ENCODE measurements at regions of chr12 and their contacts with region 1.

Region 1: DNA sequence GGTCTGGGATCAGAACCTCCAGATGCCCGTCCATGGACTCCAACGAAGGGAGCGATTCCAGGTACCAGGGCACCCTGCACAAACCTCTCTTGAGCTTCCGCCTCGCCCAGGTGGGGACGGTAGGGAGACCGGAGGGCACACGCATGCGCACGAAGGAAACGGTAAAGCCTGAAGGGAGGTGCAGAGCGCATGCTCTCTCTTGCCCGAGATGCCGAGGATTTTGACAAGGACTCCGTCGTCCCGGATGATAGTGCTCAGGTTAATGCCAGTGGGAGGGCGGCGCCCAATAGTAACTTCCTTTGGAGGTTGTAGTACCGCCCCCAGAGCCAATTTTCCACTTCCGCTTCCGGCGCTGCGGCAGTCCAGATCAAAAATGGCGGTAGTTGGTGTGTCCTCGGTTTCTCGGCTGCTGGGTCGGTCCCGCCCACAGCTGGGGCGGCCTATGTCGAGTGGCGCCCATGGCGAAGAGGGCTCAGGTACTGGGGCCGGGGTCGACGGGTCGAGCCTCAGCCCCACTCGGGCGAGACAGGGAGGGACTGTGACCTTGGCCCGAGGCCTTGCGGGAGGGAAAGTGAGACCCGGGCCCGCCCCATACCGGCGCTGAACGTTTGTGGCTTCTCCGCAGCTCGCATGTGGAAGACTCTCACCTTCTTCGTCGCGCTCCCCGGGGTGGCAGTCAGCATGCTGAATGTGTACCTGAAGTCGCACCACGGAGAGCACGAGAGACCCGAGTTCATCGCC is at the start of gene COX6A1:
- ATAC-seq: peak; percentile 96 to 100 (median 100)
- H3K4me3 ChIP-seq: peak within 1 kb of the TSS; percentile 62 to 99 (median 83)
- H3K27ac ChIP-seq: peak within 1 kb of the TSS; percentile 67 to 88
- H3K4me1 ChIP-seq: peaks cover 13 to 14% of the 10 kb centered on the region in 2 donors
- total RNA-seq, gene COX6A1: 604 to 967 (median 671) TPM

Region 2: GRCh38 chr12:120321382-120322202 is 116.3 kb before region 1 on chr12:
- in situ Hi-C with region 1: loop called in 4 of 9 experiments (anchors 10 to 25 kb)
- ATAC-seq: peak in 2 of 8 experiments; percentile 4 to 6
- H3K4me3 ChIP-seq: no peak overlapping the region
- H3K27ac ChIP-seq: no peak overlapping the region
- H3K4me1 ChIP-seq: peaks cover 5 to 8% of the 10 kb centered on the region in 2 donors

Region 3: DNA sequence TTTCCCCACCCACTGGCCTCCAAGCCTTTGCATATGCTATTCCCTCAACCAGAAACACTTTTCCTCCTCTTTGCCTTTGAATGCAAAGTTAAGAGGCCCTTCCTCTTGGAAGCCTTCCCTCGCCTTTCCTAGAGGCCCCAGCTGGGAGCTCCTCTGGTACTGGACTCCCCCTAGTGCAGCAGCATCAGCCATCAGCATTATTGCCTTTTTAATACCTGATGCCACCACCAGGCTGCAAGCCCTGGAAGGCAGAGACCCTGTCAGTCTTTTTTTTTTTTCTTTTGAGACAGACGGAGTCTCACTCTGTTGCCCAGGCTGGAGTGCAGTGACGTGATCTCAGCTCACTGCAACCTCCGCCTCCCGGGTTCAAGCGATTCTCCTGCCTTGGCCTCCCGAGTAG is 91.2 kb before region 1 on chr12:
- in situ Hi-C with region 1: loop called in 4 of 9 experiments (anchors 10 to 25 kb)
- ATAC-seq: peak in 1 of 8 experiments; percentile 35
- H3K4me3 ChIP-seq: no peak overlapping the region
- H3K27ac ChIP-seq: no peak overlapping the region
- H3K4me1 ChIP-seq: no peaks in the 10 kb centered on the region

Region 4: GRCh38 chr12:120356567-120357030 is 81.3 kb before region 1 on chr12:
- in situ Hi-C with region 1: loop called in 1 of 9 experiments (anchors 10 kb)
- ATAC-seq: peak; percentile 79 to 98 (median 84)
- H3K4me3 ChIP-seq: peak overlapping the region in 1 of 5 donors; percentile 14
- H3K27ac ChIP-seq: peak overlapping the region in 1 of 2 donors; percentile 54
- H3K4me1 ChIP-seq: peaks cover 8 to 20% of the 10 kb centered on the region in 2 donors